ENCODE measurements at regions of chr4 and their contacts with region 1.

Region 1: DNA sequence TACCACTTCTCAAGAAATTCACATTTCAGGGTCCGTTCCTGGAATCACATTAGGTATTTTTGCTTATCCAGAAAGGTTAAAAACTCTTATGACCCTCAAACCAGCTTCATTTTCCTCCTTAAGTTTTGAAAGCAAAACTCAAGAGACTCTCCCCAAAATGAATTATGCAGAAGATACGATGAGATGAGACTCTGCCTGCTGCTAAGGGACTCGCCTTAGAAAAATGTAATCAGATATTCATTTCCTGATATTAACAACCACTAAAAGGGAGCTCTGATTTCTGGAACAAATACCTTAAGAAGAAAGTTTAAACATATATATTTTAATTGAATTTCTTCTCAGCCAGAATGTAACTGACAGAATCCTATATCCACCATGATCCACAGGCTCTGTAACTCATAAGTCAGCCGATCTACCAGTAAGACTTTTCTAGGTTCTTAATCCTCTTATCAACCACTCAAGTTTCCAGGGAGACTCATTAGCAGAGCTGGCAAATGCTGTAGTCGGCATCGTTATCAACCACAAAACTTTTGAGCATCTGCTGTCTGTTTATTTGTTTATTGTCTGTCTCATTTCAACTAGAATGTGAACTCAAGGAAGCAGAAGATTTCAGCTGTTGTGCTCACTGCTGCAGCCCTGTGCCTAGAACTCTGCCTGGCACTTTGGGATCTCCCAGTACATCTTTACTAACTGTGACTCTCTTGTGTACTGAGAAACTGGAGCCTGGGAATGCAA is 112.5 kb downstream of the LDB2 start:
- DNase-seq: no peak
- H3K4me3 ChIP-seq: no peak overlapping the region
- H3K27ac ChIP-seq: no peak overlapping the region
- H3K4me1 ChIP-seq: no peaks in the 10 kb centered on the region
- H3K27me3 ChIP-seq: no peaks in the 10 kb centered on the region
- CTCF ChIP-seq: no peak

Region 2: DNA sequence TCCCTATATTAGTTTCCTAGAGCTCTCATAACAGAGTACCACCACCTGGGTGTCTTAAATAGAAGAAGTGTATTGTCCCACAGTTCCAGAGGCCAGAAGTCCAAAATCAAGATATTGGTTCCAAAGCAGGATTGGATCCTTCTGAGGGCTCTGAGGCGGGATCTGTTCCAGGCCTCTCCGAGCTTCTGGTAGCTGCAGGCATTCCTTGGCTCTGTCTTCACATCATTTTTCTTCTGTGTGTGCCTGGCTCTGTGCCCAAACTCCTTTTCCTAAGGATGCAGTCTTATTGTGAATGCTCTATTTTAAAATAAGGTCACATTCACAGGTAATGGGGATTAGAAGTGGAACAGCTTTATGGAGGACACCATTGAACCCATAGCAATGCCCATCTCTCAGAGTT is 305.9 kb before region 1 on chr4:
- CTCF ChIA-PET with region 1: no interaction called
- dilution Hi-C with region 1: no loop called
- in situ Hi-C with region 1: no loop called
- intact Hi-C with region 1: loop called (anchors 10 kb)
- DNase-seq: no peak
- H3K4me3 ChIP-seq: no peak overlapping the region
- H3K27ac ChIP-seq: no peak overlapping the region
- H3K4me1 ChIP-seq: no peaks in the 10 kb centered on the region
- H3K27me3 ChIP-seq: no peaks in the 10 kb centered on the region
- CTCF ChIP-seq: no peak

Measured in mammary epithelial cell (primary cell).